Activated B cell treated with CpG ODN at 0.5 μM for 24 hours (primary cell): ENCODE measurements at regions of chr5 and their contacts with region 1.

Region 1: DNA sequence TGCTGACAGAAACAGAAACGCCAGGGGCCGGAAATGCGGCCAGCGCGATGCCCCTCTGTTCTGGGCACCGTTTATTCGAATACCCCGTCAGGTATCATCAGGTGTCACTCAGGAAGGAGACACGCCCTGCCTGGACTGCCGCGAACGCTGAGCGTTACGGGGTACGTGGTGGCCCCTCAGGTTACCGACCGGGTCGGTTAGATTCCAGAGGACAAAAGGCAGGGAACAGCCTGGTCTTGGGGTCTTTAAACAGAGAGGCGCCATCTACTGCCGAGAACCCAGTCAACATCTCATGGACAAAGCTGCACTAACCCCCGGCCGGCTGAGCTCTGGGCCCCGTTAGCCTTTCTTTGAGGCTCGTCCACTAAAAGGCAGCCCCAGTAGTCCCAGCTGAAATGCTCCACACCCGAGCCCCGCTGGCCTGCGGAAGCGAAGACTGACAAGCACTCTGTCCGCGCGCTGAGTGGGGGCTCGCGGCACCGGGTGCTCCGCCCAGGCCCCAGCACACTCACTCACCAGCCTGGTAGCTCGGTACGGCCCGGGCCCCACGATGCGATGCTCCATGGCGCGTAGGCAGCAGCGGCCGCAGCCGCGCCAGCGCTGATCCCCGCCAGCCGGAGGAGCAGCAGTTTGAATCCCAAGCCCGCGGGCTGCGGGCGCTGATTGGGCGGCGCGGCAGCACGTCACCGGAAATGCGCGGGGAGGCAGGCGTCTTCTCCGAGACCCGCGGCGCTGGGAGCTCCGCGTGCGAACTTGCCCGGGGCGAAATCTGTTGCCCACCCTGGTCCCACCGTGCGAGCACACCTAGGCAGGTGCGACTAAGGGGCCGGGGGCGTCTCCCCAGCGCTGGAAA is at the start of gene DEPDC1B:
- DNase-seq: peak; percentile 79
- ATAC-seq: peak; percentile 89
- H3K4me3 Mint-ChIP-seq: peak within 1 kb of the TSS; percentile 90
- H3K27ac Mint-ChIP-seq: peak within 1 kb of the TSS; percentile 42
- H3K4me1 Mint-ChIP-seq: peaks cover 12% of the 10 kb centered on the region
- H3K27me3 Mint-ChIP-seq: no peaks in the 10 kb centered on the region
- CTCF ChIP-seq: no peak
- total RNA-seq, gene DEPDC1B: 0.44 and 0.98 TPM in 2 replicates

Region 2: GRCh38 chr5:60148356-60148755 is 551.4 kb before region 1 on chr5:
- CTCF ChIA-PET with region 1: no interaction called
- POLR2A ChIA-PET with region 1: no interaction called
- intact Hi-C with region 1: no loop called
- DNase-seq: no peak
- ATAC-seq: no peak
- H3K4me3 Mint-ChIP-seq: no peak overlapping the region
- H3K27ac Mint-ChIP-seq: no peak overlapping the region
- H3K4me1 Mint-ChIP-seq: no peaks in the 10 kb centered on the region
- H3K27me3 Mint-ChIP-seq: no peaks in the 10 kb centered on the region
- CTCF ChIP-seq: no peak

Region 3: DNA sequence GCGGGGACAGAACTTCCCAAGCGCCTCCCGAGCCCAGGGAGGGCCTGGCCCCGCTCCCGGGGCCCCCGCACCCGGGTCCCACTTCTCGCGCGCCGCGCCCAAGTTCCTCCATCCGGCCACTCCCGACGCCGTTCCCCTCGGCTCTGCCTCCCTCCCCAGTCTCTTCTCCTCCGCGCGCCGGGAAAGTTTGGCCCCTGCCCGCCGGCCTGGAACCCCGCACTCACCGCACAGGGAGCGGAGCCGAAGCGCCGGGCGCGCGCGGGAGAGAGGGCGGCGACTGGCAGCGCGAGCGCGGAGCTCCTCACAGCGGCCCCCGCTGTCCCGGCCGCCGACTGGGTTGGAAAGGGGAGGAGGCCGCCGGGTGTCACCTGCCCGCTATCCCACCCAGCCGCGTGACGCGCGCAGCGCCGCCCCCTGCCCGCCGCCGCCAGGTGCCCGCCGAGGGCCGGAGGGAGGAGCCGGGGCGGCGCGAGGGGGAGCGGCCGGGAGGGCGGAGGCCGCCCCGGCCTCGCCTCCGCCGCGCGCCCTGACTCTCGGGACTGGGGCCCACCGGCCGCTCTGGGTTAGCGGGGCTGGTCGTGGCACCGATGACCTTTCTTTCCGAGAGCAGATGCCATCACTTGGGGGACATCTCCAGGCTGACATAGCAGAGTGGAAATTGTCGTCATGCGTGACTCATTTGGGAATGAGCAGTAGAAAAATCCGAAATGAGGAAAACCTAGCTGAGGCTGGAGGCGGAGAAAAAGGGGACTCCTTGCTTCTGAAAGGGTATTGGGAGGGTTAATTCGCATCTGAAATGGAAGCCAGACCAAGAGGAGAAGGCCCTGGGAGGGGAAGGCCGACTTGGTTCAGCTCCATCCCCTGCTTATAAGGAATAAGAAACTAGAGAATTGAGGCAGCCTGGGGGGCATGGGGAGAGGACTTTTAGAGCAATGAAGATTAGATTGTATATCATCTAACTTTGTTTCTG is 144.5 kb after region 1 on chr5 and contains the start of gene ELOVL7:
- CTCF ChIA-PET with region 1: no interaction called
- POLR2A ChIA-PET with region 1: no interaction called
- intact Hi-C with region 1: loop called (anchors 10 kb)
- DNase-seq: peak; percentile 38
- ATAC-seq: peak; percentile 91
- H3K4me3 Mint-ChIP-seq: peak within 1 kb of the TSS; percentile 83
- H3K27ac Mint-ChIP-seq: no peak within 1 kb of the TSS
- H3K4me1 Mint-ChIP-seq: peaks cover 11% of the 10 kb centered on the region
- H3K27me3 Mint-ChIP-seq: peaks cover 57% of the 10 kb centered on the region
- CTCF ChIP-seq: no peak
- total RNA-seq, gene ELOVL7: 0.32 and 0.69 TPM in 2 replicates

Region 4: DNA sequence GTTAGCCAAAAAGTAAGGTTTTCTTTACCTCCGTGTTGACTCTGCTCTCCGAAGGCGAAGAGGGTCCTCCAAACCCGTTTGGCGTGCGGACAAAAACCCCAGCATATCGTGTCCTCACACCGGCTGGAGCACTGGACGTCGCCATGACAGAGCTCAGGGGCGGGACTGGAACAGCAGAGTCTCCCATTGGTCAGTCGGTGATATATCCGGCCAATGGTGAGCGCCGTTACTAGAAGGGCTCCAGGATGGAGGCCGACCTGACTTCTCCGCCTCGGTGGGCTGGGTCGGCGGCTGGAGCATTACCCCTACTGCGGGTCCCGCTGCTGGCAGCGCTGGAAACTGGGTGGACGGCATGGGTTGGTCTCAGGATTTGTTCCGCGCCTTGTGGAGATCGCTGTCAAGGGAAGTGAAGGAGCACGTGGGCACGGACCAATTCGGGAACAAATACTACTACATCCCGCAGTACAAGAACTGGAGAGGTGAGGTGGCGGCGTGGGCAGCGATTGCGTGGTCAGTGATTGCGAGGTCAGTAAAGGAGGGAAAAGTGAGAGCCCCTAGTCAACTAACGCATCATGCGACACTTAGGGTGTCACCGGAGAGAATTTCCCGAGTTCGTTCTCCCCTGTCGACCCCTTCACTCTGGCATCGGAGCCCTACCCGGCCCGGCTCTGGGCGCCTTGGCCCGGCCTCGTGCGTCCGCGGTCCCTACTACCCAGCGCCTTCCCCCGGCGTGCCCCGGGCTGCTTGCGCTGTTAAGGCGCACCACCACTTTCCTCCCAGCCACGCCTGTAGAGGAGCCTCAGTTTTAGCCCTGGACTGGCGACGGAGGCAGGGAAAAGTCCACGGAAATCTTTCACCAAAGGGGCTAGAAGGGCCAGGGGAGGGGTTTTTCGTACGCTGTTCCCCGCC is 245.4 kb after region 1 on chr5 and contains the starts of genes ERCC8 and NDUFAF2:
- CTCF ChIA-PET with region 1: no interaction called
- POLR2A ChIA-PET with region 1: no interaction called
- intact Hi-C with region 1: loop called (anchors 1 kb)
- DNase-seq: peak; percentile 75
- ATAC-seq: peak; percentile 98
- H3K4me3 Mint-ChIP-seq: no peak within 1 kb of the TSS
- H3K27ac Mint-ChIP-seq: no peak within 1 kb of the TSS
- H3K4me1 Mint-ChIP-seq: peaks cover 28% of the 10 kb centered on the region
- H3K27me3 Mint-ChIP-seq: no peaks in the 10 kb centered on the region
- CTCF ChIP-seq: no peak
- total RNA-seq, gene ERCC8: 10.7 and 11.2 TPM in 2 replicates
- total RNA-seq, gene NDUFAF2: 13.1 and 20.0 TPM in 2 replicates

Region 5: DNA sequence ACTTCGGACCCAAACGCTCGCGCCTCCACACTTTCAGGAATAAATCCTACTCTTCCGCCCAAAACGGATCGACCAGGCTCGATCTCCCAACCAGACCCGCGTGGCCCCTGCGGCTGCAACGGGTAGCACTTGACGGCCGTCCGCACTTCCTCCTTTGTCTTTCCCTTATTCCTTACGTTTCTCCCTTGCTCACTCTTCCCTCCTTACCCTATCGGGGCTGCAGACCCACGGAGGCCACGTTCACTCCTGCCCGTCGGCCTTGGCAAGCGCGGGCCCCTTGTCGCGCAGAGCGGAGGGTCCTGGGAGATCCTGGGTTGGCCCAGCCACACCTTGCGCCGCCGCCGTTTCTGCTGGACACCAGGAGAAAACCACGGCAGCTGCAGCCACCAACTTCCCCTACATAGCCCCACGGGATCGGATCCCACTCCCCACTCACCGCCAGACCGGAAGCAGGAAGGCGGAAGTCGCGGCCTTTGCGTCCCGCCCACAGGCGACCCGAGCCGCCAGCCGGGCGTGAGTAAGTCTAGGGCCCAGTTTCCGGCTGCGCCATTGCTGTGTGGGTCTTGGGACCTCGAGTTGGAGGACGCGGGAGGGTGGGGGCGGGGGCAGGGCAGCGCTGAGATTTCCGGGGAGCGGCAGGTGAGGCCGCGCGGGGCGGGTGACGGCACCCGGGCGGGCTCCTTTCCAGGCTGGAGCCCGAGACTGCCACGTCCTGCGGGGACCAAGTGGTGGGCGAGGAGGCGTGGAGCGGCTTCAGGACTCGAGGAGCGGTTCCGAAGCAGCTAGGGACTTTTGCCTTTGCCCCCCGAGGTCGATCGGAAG is 462.5 kb after region 1 on chr5 and contains the start of gene SMIM15:
- CTCF ChIA-PET with region 1: no interaction called
- POLR2A ChIA-PET with region 1: no interaction called
- intact Hi-C with region 1: loop called (anchors 10 kb)
- DNase-seq: peak; percentile 76
- ATAC-seq: peak; percentile 92
- H3K4me3 Mint-ChIP-seq: peak within 1 kb of the TSS; percentile 95
- H3K27ac Mint-ChIP-seq: peak within 1 kb of the TSS; percentile 95
- H3K4me1 Mint-ChIP-seq: peaks cover 30% of the 10 kb centered on the region
- H3K27me3 Mint-ChIP-seq: no peaks in the 10 kb centered on the region
- CTCF ChIP-seq: no peak
- total RNA-seq, gene SMIM15: 35.7 and 36.4 TPM in 2 replicates